HEK293 (cell line): ENCODE measurements at regions of chr1 and their contacts with region 1.

Region 1: DNA sequence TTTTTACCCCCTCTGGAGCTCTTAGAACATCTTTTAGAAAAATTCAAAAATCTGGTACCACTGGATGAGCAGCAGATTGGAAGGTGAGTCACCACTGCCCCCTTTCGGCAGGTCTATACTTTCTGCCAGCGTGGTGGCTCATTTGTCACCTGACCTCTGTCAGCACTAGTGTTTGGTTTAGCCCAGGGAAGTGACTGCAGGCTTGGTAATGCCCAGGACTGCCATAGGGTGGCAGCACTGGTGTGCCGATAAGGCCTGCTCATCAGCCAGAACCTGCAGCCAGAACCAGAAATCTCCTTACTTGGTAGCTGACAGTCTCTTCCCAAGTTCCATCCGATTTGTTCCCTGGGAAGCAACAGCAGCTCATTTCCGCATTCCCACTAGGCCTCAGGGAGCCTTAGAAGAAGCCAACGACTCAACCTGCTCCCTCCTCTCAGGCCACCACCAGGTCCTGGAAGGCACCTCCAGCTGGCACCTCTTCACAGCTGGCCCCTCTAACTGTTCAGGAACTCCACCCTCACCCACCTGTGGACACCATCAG is 6.8 kb downstream of the SMIM12 start:
- H3K4me3 ChIP-seq: no peak overlapping the region
- H3K27ac ChIP-seq: no peak overlapping the region
- H3K4me1 ChIP-seq: no peaks in the 10 kb centered on the region
- CTCF ChIP-seq: peak; percentile 97

Region 2: DNA sequence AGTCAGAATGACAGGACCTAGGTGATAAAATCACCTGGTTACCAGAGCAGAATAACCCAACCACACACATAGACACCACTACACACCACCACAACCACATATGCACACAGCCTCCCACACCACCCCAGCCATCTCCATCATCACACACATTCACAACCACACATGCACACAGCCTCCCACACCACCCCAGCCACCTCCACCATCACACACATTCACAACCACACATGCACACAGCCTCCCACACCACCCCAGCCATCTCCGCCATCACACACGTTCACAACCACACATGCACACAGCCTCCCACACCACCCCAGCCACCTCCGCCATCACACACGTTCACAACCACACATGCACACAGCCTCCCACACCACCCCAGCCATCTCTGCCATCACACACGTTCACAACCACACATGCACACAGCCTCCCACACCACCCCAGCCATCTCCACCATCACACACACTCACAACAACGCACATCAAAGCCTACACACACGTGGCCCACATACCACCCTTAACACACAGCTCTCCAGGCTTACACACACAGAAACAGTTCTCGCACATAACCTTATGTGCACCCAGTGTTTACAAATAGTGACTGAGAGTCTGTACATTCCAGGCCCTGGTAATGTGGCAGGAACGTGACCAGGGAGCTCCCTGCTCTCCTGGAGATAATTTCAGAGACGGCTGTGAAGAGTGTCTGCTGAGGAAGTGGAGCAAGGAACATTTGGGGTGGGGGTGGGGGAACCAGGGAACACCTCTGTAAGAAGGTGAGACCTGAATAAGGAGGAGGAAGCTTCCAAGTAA is 75.0 kb before region 1 on chr1:
- CTCF ChIA-PET with region 1: interaction called, 11 read pairs
- POLR2A ChIA-PET with region 1: no interaction called
- H3K4me3 ChIP-seq: no peak overlapping the region
- H3K27ac ChIP-seq: no peak overlapping the region
- H3K4me1 ChIP-seq: no peaks in the 10 kb centered on the region
- CTCF ChIP-seq: no peak

Region 3: GRCh38 chr1:34786521-34787325 is 66.0 kb before region 1 on chr1:
- CTCF ChIA-PET with region 1: interaction called, 28 read pairs
- POLR2A ChIA-PET with region 1: no interaction called
- H3K4me3 ChIP-seq: no peak overlapping the region
- H3K27ac ChIP-seq: no peak overlapping the region
- H3K4me1 ChIP-seq: no peaks in the 10 kb centered on the region
- CTCF ChIP-seq: peak; percentile 86

Region 4: GRCh38 chr1:34825455-34826091 is 27.2 kb before region 1 on chr1:
- CTCF ChIA-PET with region 1: interaction called, 43 read pairs
- POLR2A ChIA-PET with region 1: no interaction called
- H3K4me3 ChIP-seq: no peak overlapping the region
- H3K27ac ChIP-seq: no peak overlapping the region
- H3K4me1 ChIP-seq: no peaks in the 10 kb centered on the region
- CTCF ChIP-seq: no peak

Region 5: DNA sequence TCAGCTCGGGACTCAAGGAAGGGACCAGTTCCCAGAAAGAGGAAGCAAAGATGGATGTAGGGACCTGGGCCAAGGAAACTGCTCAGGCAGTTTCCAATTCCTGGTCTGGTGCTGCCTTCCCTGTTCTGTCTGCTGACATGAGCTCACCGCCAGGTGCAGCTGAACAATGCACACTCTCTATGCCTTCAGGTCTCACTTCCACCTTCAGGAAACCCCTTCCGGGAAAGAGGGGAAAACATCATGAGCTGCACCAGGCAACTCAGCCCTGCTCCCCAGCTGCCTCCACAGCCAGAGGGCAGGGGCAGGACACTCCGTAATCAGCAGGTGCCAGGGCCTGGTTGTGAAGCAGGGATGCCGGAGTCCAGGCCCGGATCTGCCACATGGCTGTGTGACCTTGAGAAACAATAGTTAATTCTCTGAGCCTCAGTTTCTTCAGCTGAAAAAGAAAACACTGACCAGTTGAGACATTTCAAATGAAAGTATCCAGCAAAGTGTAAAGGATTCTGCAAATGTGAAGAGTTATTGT is 21.0 kb before region 1 on chr1:
- CTCF ChIA-PET with region 1: interaction called, 43 read pairs
- POLR2A ChIA-PET with region 1: no interaction called
- H3K4me3 ChIP-seq: no peak overlapping the region
- H3K27ac ChIP-seq: no peak overlapping the region
- H3K4me1 ChIP-seq: no peaks in the 10 kb centered on the region
- CTCF ChIP-seq: no peak

Region 6: GRCh38 chr1:34865981-34866761 is 13.4 kb after region 1 on chr1:
- CTCF ChIA-PET with region 1: interaction called, 66 read pairs
- POLR2A ChIA-PET with region 1: interaction called, 3 read pairs
- H3K4me3 ChIP-seq: peak overlapping the region; percentile 51
- H3K27ac ChIP-seq: peak overlapping the region; percentile 18; the same call in 1 of the 2 replicates
- H3K4me1 ChIP-seq: no peaks in the 10 kb centered on the region
- CTCF ChIP-seq: peak; percentile 94

Region 7: DNA sequence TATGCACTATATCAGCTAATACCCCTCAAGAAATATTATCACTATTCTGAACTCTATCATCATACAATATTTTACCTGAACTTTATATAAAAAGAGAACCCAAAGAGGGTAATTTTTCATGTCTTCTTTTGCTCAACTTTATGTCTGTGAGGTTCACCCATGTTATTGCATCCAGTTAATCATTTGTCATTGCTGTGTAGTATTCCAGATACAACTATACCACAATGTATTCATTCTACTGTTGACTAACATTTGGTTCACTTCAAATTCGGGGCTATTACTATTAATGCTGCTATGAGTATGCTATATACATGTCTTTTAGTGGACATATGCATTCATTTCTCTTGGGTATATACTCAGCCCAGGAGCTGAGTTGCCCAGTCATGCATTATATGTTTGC is 97.7 kb after region 1 on chr1:
- CTCF ChIA-PET with region 1: no interaction called
- POLR2A ChIA-PET with region 1: no interaction called
- H3K4me3 ChIP-seq: no peak overlapping the region
- H3K27ac ChIP-seq: no peak overlapping the region
- H3K4me1 ChIP-seq: no peaks in the 10 kb centered on the region
- CTCF ChIP-seq: no peak